ENCODE measurements at regions of chr12 and their contacts with region 1.

Region 1: GRCh38 chr12:89162704-89163261 is 189.5 kb downstream of the DUSP6 start:
- DNase-seq: peak; percentile 59
- H3K4me3 Mint-ChIP-seq: no peak overlapping the region
- H3K27ac Mint-ChIP-seq: no peak overlapping the region
- H3K4me1 Mint-ChIP-seq: peaks cover 23% of the 10 kb centered on the region
- H3K27me3 Mint-ChIP-seq: no peaks in the 10 kb centered on the region

Region 2: DNA sequence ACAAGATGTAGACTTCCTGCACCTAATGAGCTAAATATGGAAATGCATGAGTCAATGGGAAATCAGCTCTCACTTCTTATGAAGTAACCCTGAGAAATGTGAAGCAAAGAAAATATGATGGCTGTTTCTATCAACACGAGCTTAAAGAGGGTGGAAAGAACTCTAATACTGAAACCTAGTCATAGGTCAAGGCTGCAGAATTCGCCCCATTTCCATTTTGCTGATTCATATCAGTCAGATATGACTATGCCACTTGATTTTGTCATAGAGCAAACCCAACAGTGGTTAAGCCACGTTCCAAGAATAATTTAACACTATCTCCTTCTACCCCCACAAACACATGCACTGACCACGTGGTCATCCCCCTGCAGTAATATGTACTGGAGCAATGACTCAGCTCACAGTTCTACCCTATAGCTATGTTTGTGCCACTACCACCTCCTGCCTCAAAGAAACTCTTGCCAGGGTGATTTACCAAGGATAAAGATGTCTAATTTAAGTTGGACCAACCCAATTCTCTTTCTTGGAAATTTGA is 863.1 kb before region 1 on chr12:
- intact Hi-C with region 1: loop called (anchors 2 kb)
- DNase-seq: peak; percentile 29
- H3K4me3 Mint-ChIP-seq: no peak overlapping the region
- H3K27ac Mint-ChIP-seq: peak overlapping the region; percentile 76
- H3K4me1 Mint-ChIP-seq: peaks cover 35% of the 10 kb centered on the region
- H3K27me3 Mint-ChIP-seq: no peaks in the 10 kb centered on the region

Region 3: GRCh38 chr12:89073027-89073398 is 89.8 kb before region 1 on chr12:
- intact Hi-C with region 1: loop called (anchors 1 kb)
- DNase-seq: no peak
- H3K4me3 Mint-ChIP-seq: no peak overlapping the region
- H3K27ac Mint-ChIP-seq: peak overlapping the region; percentile 5
- H3K4me1 Mint-ChIP-seq: peaks cover 31% of the 10 kb centered on the region
- H3K27me3 Mint-ChIP-seq: no peaks in the 10 kb centered on the region

Region 4: GRCh38 chr12:89084751-89085150 is 78.0 kb before region 1 on chr12:
- intact Hi-C with region 1: no loop called
- DNase-seq: no peak
- H3K4me3 Mint-ChIP-seq: no peak overlapping the region
- H3K27ac Mint-ChIP-seq: no peak overlapping the region
- H3K4me1 Mint-ChIP-seq: peaks cover 10% of the 10 kb centered on the region
- H3K27me3 Mint-ChIP-seq: peaks cover 2% of the 10 kb centered on the region

Region 5: DNA sequence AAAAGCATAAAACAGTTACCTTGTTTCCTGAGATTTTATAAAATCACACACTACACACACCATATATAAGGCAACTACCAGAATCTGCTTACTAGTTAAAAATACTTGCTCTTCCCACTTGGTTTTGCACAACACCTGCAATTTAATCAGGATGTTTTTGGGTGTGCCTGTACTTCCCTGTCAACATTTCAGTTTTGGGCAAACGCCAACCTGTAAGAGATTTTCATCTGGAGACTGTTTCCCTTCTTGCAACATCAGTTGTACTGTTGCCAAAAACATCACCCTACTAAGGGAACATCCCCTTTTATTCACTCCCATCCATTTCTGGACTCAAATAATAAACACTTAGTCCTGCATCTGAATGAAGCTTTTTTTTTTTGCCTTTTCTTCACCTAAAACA is 17.2 kb after region 1 on chr12:
- intact Hi-C with region 1: loop called (anchors 1 kb)
- DNase-seq: no peak
- H3K4me3 Mint-ChIP-seq: peak overlapping the region; percentile 48
- H3K27ac Mint-ChIP-seq: peak overlapping the region; percentile 95
- H3K4me1 Mint-ChIP-seq: peaks cover 62% of the 10 kb centered on the region
- H3K27me3 Mint-ChIP-seq: no peaks in the 10 kb centered on the region

Region 6: DNA sequence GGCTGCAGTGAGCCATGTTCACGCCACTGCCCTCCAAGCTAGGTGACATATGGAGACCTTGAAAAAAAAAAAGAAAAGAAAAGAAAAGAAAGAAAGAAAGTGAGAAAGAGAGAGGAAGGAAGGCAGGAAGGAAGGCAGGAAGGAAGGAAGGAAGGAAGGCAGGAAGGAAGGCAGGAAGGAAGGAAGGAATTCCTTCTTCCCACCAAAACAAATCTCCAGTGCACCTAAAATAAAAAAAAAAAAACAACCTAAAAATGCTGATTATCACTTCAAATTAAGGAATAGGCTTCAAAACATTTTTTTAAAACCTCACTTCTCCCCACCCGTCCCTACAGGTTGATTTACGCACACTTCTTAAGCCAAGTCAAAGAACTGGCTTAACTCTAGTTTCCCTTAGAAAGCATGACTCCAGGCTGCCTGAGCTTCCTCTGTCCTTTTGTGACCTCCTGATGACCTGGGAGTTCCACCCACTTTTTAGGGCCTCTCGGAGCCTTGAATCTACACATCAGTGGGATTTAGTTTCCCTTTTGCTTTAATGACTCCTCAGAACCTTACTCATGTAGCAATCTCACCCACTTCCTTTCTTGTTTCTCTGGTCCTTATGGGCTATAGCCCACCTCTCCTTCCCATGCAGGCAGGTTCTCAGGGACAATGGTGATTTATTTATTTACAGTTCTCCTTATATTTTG is 170.9 kb after region 1 on chr12:
- intact Hi-C with region 1: loop called (anchors 5 kb)
- DNase-seq: no peak
- H3K4me3 Mint-ChIP-seq: peak overlapping the region; percentile 46
- H3K27ac Mint-ChIP-seq: peak overlapping the region; percentile 76
- H3K4me1 Mint-ChIP-seq: peaks cover 26% of the 10 kb centered on the region
- H3K27me3 Mint-ChIP-seq: no peaks in the 10 kb centered on the region

Region 7: GRCh38 chr12:89461649-89462612 is 299.1 kb after region 1 on chr12:
- intact Hi-C with region 1: loop called (anchors 1 kb)
- DNase-seq: no peak
- H3K4me3 Mint-ChIP-seq: peak overlapping the region; percentile 60
- H3K27ac Mint-ChIP-seq: peak overlapping the region; percentile 36
- H3K4me1 Mint-ChIP-seq: peaks cover 43% of the 10 kb centered on the region
- H3K27me3 Mint-ChIP-seq: no peaks in the 10 kb centered on the region

Region 8: GRCh38 chr12:89756585-89757321 is 594.0 kb after region 1 on chr12:
- intact Hi-C with region 1: loop called (anchors 1 kb)
- DNase-seq: peak; percentile 35
- H3K4me3 Mint-ChIP-seq: peak overlapping the region; percentile 3
- H3K27ac Mint-ChIP-seq: peak overlapping the region; percentile 81
- H3K4me1 Mint-ChIP-seq: peaks cover 29% of the 10 kb centered on the region
- H3K27me3 Mint-ChIP-seq: no peaks in the 10 kb centered on the region